AG04449 (cell line): ENCODE measurements at regions of chr15 and their contacts with region 1.

Region 1: DNA sequence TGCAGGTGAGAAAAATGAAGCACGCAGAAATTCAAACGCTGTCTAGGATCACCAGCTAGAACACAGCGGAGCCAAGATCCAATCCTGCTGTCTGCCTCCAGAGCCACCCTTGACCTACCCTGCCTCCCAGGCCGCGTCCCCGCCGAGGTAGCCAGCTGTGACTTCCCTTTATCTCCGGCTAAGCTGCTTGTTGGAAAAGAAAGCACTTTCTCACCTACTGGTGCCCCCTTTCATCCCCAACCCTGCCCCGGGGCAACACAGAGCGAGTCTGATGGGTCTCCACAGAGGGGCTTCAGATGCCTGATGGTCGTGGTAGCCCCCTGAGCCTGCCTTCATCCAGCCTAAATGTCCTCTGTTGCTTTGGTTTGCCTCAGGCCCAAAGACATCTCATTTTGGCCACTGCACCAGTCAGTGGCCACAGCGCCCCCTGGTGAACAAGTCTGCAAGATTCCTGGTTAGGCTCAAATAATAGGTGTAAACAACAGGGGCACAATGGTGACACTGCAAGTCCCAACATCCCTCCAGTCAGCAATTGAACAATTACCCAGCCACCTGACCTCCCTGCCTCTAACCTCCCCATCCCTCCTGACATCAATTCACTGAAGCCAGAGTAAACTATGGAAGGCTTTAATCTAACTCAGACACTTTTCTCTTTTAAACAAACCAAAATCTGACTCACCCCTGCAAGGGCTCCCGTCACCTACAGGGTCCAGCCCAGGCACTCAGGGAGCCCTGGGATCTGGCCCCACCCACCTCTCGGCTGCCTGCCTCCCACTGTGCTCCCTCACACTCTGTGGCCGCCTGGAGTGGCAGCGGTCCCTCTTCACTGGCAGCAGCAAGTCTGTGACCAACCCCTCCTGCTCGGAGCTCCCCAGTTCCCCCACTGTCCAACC is 27.3 kb upstream of the BCL2L10 start:
- DNase-seq: no peak
- H3K4me3 ChIP-seq: no peak overlapping the region
- CTCF ChIP-seq: peak; percentile 73

Region 2: DNA sequence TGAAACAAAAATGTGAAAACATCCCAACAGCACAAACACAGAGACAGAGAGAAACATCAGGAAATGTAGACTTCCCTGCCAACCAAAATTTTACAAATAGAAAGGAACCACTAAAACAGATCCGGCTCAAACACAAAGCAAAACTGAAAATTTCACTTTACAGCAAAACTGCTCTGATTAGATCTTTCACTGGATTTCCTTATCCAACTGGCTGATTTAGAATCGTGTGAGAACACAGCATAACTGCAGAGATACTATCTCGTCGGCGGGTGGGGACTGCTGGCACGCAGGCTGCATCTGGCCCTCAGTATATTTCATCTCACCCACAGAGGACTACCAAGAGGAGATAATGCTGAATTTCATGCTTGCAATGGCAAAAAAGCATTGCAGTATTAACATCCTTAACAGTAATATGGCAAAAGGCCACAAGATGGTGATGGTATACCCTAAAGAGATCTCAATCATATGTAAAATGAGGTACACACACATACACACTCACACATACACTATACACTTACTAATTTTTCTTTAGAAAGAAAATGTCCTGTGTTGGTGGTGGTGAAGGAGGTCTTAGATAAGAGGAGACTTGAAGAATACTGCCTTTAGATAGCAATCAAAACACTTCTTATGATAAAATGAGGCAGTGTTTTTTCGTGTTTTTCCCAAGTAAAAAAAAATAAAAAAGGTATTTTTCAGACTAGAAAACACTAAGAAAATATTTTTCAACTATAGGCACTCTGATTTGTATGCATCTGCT is 157.7 kb before region 1 on chr15:
- CTCF ChIA-PET with region 1: interaction called, 40 read pairs
- POLR2A ChIA-PET with region 1: interaction called, 5 read pairs
- DNase-seq: no peak
- H3K4me3 ChIP-seq: peak overlapping the region; percentile 18
- CTCF ChIP-seq: peak; percentile 39

Region 3: GRCh38 chr15:52019388-52020220 is 120.2 kb before region 1 on chr15:
- CTCF ChIA-PET with region 1: interaction called, 10 read pairs
- POLR2A ChIA-PET with region 1: interaction called, 3 read pairs
- DNase-seq: no peak
- H3K4me3 ChIP-seq: peak overlapping the region; percentile 66
- CTCF ChIP-seq: no peak

Region 4: GRCh38 chr15:52114261-52115055 is 25.4 kb before region 1 on chr15:
- CTCF ChIA-PET with region 1: interaction called, 13 read pairs
- POLR2A ChIA-PET with region 1: no interaction called
- DNase-seq: no peak
- H3K4me3 ChIP-seq: no peak overlapping the region
- CTCF ChIP-seq: no peak

Region 5: DNA sequence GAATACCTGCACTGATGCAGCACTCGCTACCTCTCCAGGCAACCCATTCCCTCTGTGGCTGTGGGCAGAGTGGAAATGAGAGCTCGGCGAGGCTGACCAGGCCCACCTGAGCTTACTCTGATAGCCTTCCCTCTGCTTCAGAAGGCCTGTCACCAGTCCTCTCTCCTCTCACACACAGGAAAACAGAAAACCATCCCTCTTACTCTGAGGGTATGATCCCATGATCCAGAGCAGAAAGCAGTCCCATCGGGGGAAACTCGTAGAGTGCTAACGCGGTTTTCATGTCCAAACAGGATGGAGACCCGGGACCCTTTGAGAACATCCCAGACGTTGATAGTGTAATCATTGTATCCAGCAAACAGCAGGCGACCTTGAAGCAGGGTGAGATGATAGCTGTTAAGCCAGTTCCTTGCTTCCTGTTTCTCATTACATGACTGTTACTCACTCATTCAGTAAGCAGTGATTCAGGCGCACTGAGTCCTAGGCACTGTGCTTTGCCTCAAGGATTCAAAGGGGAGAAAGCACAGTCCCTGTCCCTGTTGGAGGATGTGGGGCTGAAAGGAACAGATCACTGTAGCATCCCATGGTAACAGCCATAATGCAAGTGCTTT is 15.5 kb before region 1 on chr15:
- CTCF ChIA-PET with region 1: interaction called, 22 read pairs
- POLR2A ChIA-PET with region 1: no interaction called
- DNase-seq: no peak
- H3K4me3 ChIP-seq: no peak overlapping the region
- CTCF ChIP-seq: no peak

Region 6: GRCh38 chr15:52153900-52154895 is 14.4 kb after region 1 on chr15:
- CTCF ChIA-PET with region 1: interaction called, 14 read pairs
- POLR2A ChIA-PET with region 1: no interaction called
- DNase-seq: no peak
- H3K4me3 ChIP-seq: no peak overlapping the region
- CTCF ChIP-seq: no peak